Activated CD4-positive, alpha-beta T cell treated with anti-CD3 and anti-CD28 coated beads, Interleukin-2, amount 10 ng/mL, durations not matched to agents 24 days and 14 days (primary cell): ENCODE measurements at regions of chr1 and their contacts with region 1.

Region 1: DNA sequence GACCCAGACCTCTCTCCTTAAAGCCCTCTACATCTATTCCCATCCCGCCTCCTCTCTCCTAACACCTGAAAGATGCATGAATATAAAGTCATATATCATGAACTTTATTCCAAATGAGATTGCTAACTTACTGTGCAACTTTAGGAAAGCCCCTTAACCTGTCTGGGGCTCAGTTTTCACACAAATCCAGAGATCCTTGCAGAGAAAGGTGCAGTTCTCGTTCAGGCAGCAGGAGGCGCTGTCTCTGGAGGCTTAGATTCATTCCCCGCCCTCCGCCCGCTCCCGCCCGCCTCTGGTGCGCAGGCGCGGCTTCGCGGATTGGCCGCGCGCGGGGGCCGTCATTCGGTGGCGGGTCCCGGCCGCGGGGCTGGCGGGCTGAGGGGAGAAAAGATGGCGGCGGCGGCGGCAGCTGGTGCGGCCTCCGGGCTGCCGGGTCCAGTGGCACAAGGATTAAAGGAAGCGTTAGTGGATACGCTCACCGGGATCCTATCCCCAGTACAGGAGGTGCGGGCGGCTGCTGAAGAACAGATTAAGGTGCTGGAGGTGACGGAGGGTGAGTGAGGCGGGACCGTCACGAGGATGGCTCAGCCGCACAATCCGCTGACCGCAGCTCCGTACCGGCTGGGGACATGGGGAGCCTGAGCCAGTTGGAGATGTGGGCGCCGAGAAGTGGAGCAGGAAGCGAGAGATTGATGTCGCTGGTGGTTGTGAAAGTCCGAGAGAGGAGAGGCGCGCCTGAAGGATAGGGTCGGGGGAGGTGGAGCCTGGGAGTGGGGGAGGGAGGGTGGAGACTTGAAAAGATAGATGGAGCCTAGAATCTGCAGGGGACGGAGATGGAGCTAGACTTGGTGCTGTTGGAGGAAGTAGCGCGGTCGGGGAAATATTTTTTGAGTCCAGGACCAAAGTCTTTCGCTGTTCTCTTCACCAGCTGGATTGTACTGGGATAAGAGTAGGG is at the start of gene IPO9:
- DNase-seq: peak; percentile 99
- H3K4me3 Mint-ChIP-seq: peak within 1 kb of the TSS; percentile 94
- H3K27ac Mint-ChIP-seq: peak within 1 kb of the TSS; percentile 96
- H3K4me1 Mint-ChIP-seq: peaks cover 34% of the 10 kb centered on the region
- H3K27me3 Mint-ChIP-seq: no peaks in the 10 kb centered on the region
- total RNA-seq, gene IPO9: 66.3 and 75.5 TPM in 2 replicates

Region 2: GRCh38 chr1:201506556-201507359 is 322.3 kb before region 1 on chr1 and contains the start of gene CSRP1:
- intact Hi-C with region 1: loop called (anchors 2 kb)
- DNase-seq: peak; percentile 95
- H3K4me3 Mint-ChIP-seq: peak within 1 kb of the TSS; percentile 94
- H3K27ac Mint-ChIP-seq: peak within 1 kb of the TSS; percentile 91
- H3K4me1 Mint-ChIP-seq: peaks cover 39% of the 10 kb centered on the region
- H3K27me3 Mint-ChIP-seq: no peaks in the 10 kb centered on the region
- total RNA-seq, gene CSRP1: 59.0 and 60.6 TPM in 2 replicates

Region 3: GRCh38 chr1:201955009-201955728 is 126.1 kb after region 1 on chr1 and contains the start of gene TIMM17A:
- intact Hi-C with region 1: loop called (anchors 1 kb)
- DNase-seq: peak; percentile 99
- H3K4me3 Mint-ChIP-seq: peak within 1 kb of the TSS; percentile 100
- H3K27ac Mint-ChIP-seq: peak within 1 kb of the TSS; percentile 93
- H3K4me1 Mint-ChIP-seq: peaks cover 16% of the 10 kb centered on the region
- H3K27me3 Mint-ChIP-seq: peaks cover 2% of the 10 kb centered on the region
- total RNA-seq, gene TIMM17A: 119 and 122 TPM in 2 replicates